A673 (cell line): ENCODE measurements at regions of chr3 and their contacts with region 1.

Region 1: GRCh38 chr3:149494022-149494758 is 19.7 kb downstream of the TM4SF4 start:
- DNase-seq: peak; percentile 82
- H3K4me3 ChIP-seq: no peak overlapping the region
- H3K27ac ChIP-seq: no peak overlapping the region
- H3K4me1 ChIP-seq: no peaks in the 10 kb centered on the region
- H3K27me3 ChIP-seq: peaks cover 4% of the 10 kb centered on the region
- CTCF ChIP-seq: peak; percentile 92

Region 2: GRCh38 chr3:149736175-149736952 is 242.2 kb after region 1 on chr3:
- CTCF ChIA-PET with region 1: no interaction called
- POLR2A ChIA-PET with region 1: no interaction called
- intact Hi-C with region 1: no loop called
- DNase-seq: no peak
- H3K4me3 ChIP-seq: no peak overlapping the region
- H3K27ac ChIP-seq: no peak overlapping the region
- H3K4me1 ChIP-seq: no peaks in the 10 kb centered on the region
- H3K27me3 ChIP-seq: no peaks in the 10 kb centered on the region
- CTCF ChIP-seq: no peak

Region 3: GRCh38 chr3:149771652-149772271 is 277.6 kb after region 1 on chr3:
- CTCF ChIA-PET with region 1: no interaction called
- POLR2A ChIA-PET with region 1: no interaction called
- intact Hi-C with region 1: loop called (anchors 1 kb)
- DNase-seq: peak; percentile 63
- H3K4me3 ChIP-seq: no peak overlapping the region
- H3K27ac ChIP-seq: no peak overlapping the region
- H3K4me1 ChIP-seq: no peaks in the 10 kb centered on the region
- H3K27me3 ChIP-seq: no peaks in the 10 kb centered on the region
- CTCF ChIP-seq: peak; percentile 90

Region 4: GRCh38 chr3:149808209-149808829 is 314.1 kb after region 1 on chr3:
- CTCF ChIA-PET with region 1: interaction called, 6 read pairs
- POLR2A ChIA-PET with region 1: no interaction called
- intact Hi-C with region 1: loop called (anchors 1 kb)
- DNase-seq: peak; percentile 80
- H3K4me3 ChIP-seq: no peak overlapping the region
- H3K27ac ChIP-seq: no peak overlapping the region
- H3K4me1 ChIP-seq: peaks cover 9% of the 10 kb centered on the region
- H3K27me3 ChIP-seq: no peaks in the 10 kb centered on the region
- CTCF ChIP-seq: peak; percentile 85

Region 5: GRCh38 chr3:150227839-150228238 is 733.6 kb after region 1 on chr3:
- CTCF ChIA-PET with region 1: no interaction called
- POLR2A ChIA-PET with region 1: no interaction called
- intact Hi-C with region 1: loop called (anchors 10 kb)
- DNase-seq: peak; percentile 86
- H3K4me3 ChIP-seq: no peak overlapping the region
- H3K27ac ChIP-seq: no peak overlapping the region
- H3K4me1 ChIP-seq: peaks cover 8% of the 10 kb centered on the region
- H3K27me3 ChIP-seq: no peaks in the 10 kb centered on the region
- CTCF ChIP-seq: peak; percentile 93